HEK293 (cell line): ENCODE measurements at regions of chr12 and their contacts with region 1.

Region 1: DNA sequence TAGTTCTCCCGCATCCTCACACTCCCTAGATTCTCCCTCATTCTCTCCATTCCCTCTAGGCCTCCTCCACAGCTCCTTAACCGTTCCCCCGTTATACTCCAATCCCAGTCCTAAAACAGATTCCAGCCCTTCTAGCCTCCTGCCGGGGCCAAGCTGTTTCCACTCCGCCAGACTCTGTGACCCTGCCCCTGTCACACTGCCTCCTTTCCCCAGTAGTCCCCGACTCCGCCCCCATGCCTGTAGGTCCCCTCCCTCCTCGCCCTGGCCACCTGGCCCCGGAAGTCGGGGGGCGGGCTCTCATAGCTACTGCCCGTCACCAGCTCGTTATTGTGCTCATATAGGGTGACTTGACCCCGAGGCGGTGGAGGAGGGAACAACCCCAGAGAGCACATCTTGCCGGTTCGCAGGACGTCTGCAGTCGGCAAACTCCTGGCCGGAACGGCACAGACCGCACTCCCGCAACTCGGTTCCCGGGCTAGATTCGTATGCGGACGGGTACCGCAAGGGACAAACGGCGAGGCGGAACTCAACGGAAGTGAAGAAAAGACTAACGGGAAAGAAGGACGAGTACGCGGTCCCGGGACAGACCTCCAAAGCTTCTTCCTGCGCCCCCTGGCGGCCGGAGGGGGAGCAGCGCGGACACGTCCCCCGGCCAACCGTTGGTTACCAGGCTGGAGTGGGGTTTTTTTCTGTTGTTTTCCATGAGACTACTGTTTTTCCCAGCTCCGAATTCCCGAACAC is at the start of gene AAAS:
- H3K4me3 ChIP-seq: peak within 1 kb of the TSS; percentile 97
- H3K27ac ChIP-seq: peak within 1 kb of the TSS; percentile 82
- H3K4me1 ChIP-seq: no peaks in the 10 kb centered on the region
- CTCF ChIP-seq: peak; percentile 96

Region 2: DNA sequence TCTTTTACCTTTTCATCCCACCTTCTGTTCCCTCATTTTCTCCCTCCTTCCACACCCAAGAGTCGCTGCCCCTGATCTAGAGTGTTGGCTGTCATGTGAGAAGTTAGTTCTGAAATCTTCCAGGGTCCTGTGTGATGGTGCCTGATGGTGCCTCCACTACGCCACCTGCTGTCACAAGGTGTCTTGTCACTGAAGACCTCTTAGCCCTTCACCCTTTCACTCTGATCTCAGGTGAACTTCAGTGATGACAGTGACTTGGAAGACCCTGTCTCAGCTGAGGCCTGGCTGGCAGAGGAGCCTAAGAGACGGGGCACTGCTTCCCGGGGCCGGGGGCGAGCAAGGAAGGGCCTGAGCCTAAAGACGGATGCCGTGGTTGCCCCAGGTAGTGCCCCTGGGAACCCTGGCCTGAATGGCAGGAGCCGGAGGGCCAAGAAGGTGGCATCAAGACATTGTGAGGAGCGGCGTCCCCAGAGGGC is 33.5 kb before region 1 on chr12:
- CTCF ChIA-PET with region 1: interaction called, 13 read pairs
- POLR2A ChIA-PET with region 1: interaction called, 8 read pairs
- H3K4me3 ChIP-seq: no peak overlapping the region
- H3K27ac ChIP-seq: no peak overlapping the region
- H3K4me1 ChIP-seq: no peaks in the 10 kb centered on the region
- CTCF ChIP-seq: peak; percentile 45; the same call in 1 of the 2 replicates

Region 3: DNA sequence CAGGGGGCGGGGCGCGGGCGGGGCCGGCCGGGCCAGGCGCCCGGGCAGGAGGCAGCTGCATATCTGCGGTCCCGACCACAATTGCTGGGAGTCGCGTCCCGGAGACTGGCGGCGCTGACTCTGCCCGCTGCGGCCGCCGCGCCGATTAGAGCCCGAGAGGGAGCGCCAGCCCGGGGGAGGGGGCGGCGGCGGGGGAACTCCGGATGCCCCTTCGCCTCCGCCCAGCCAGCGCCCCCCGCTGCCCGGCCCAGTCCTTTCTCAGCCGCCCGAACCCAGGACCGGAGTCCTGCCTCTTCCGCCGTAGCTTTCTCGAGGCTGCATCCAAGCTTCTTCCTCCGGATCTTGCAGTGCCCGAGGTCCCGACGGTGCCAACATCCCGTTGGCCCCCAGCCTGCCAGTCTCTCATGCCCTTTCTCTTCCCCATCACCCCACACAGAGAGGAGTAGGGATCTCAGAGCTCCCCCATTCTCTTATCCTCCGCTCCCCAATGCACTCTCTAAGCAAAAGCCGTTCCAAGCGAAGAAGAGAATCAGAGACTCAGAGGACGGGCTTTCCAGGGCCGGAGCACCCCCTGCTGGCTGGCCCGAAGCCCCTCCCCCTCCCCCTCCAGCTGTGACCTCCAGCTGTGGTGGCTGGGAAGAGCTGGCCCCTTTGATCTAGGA is 23.7 kb after region 1 on chr12:
- CTCF ChIA-PET with region 1: interaction called, 156 read pairs
- POLR2A ChIA-PET with region 1: interaction called, 19 read pairs
- H3K4me3 ChIP-seq: peak overlapping the region; percentile 62
- H3K27ac ChIP-seq: peak overlapping the region; percentile 21; the same call in 1 of the 2 replicates
- H3K4me1 ChIP-seq: no peaks in the 10 kb centered on the region
- CTCF ChIP-seq: peak; percentile 93

Region 4: GRCh38 chr12:53414756-53415417 is 93.6 kb after region 1 on chr12:
- CTCF ChIA-PET with region 1: interaction called, 12 read pairs
- POLR2A ChIA-PET with region 1: interaction called, 13 read pairs
- H3K4me3 ChIP-seq: no peak overlapping the region
- H3K27ac ChIP-seq: no peak overlapping the region; the same call in 1 of the 2 replicates
- H3K4me1 ChIP-seq: peaks cover 10% of the 10 kb centered on the region
- CTCF ChIP-seq: no peak

Region 5: DNA sequence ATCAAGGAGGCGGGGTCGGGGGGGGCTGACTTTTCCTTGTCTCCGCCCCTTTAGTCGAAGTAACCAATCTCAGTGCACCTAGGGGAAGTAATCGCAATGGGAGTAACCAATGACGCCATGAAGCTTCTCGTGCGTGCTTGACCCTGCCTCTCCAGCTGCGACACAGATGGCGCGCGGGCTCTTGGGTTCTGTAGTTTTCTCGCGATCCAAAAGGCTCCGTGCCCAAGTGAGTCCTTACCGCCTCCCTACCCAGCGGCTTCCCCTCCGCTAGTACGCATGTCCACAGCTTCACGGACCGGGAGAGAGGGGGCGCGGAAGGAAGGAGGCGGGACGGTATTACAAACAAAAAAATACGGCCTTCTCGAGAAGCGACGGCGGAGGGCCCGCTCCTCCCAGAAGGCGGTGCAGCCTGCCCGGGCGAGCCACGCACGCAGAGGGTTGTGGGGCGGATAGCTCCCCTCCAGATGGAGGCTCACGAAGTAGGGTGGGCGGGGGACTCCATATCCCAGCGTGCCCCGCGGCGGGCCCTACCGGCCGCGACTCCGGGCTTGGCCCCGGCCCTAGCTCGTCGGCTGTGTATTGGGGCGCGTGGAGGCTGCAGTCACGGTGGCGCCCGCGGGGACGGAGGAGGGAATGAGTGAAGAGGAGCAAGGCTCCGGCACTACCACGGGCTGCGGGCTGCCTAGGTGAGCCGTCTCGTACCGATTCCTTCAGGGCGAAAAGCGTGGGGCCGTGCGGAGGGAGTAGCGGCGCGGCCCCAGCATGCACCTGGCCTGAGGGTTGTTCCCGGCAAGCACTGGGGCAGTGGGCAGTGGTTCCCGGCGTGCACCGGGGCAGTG is 179.8 kb after region 1 on chr12 and contains the start of gene TARBP2:
- CTCF ChIA-PET with region 1: interaction called, 6 read pairs
- POLR2A ChIA-PET with region 1: interaction called, 25 read pairs
- H3K4me3 ChIP-seq: peak within 1 kb of the TSS; percentile 67
- H3K27ac ChIP-seq: peak within 1 kb of the TSS; percentile 94
- H3K4me1 ChIP-seq: peaks cover 16% of the 10 kb centered on the region
- CTCF ChIP-seq: peak; percentile 70